Activated T-helper 1 cell treated with anti-CD3 and anti-CD28 coated beads, Interleukin-12 subunit alpha, Interleukin-12 subunit beta, Interleukin-2, Interleukin-4 antibody, amounts not matched to agents 30 ng/mL and 10 ng/mL and 1 ng/mL, durations not matched to agents 14 hours and 24 hours and 36 hours (primary cell): ENCODE measurements at regions of chr14 and their contacts with region 1.

Region 1: DNA sequence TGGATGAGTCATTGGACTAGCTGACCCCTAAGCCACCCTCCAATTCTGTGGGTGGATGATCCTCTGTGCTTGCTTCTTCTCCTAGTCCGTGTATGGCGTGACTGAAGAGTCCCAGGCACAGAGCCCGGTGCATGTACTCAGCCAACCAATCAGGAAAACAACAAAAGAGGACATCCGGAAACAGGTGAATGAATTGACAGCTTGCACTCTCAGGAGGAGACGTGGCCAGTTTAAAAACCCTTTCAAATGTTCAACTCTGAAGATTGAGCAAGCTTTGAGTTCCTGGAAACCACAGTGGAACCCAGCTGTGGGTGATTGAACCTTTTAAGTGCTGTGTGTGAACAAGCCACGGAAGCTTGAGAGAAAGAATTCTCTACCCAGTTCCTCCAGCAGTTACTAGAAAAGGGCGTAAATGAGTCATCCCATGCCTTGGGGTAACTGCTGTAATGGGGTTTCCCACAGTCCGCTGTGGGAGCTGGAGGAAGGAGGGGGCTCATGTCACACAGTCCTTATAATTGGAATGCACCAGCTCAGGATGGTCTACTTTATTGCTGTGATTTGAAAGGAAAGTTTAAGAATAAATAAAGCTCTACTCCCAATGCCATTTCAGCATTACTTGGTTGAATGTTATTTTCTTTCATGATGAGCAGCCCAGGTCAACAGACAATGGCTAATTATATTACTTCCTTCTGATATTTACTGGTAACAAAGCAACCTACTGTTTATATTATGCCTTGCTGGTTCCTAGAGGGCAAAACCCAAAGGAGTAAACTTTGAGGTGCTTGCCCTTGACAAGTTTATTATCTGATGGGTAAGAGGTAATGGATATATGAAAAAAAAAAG is 417.0 kb downstream of the DPF3 start:
- DNase-seq: peak; percentile 81
- H3K4me3 Mint-ChIP-seq: peak overlapping the region; percentile 53
- H3K27ac Mint-ChIP-seq: peak overlapping the region; percentile 87
- H3K4me1 Mint-ChIP-seq: peaks cover 80% of the 10 kb centered on the region
- H3K27me3 Mint-ChIP-seq: no peaks in the 10 kb centered on the region

Region 2: DNA sequence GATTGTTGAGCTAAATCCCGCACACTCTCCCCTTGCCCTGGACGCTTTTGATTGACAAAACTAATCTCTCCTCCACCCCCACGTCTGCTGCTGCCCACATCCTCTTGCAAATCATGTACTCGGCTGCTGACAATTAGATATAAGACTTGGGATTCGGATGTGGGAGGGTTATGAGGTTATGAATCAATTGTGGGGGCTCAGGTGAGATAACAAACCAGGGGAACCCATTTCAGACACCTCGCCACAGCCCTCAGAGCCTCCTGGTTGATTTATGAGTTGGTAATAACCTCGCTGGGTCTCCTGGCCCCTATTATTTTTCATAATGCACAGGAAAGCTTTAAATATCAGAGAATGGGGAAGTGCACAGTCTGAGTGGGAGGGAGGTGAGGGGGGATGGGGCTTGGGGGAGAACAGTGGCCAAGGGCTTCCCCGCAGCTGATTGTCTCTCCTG is 32.9 kb before region 1 on chr14:
- intact Hi-C with region 1: loop called (anchors 5 kb)
- DNase-seq: peak; percentile 27
- H3K4me3 Mint-ChIP-seq: peak overlapping the region; percentile 65
- H3K27ac Mint-ChIP-seq: peak overlapping the region; percentile 76
- H3K4me1 Mint-ChIP-seq: peaks cover 86% of the 10 kb centered on the region
- H3K27me3 Mint-ChIP-seq: no peaks in the 10 kb centered on the region

Region 3: DNA sequence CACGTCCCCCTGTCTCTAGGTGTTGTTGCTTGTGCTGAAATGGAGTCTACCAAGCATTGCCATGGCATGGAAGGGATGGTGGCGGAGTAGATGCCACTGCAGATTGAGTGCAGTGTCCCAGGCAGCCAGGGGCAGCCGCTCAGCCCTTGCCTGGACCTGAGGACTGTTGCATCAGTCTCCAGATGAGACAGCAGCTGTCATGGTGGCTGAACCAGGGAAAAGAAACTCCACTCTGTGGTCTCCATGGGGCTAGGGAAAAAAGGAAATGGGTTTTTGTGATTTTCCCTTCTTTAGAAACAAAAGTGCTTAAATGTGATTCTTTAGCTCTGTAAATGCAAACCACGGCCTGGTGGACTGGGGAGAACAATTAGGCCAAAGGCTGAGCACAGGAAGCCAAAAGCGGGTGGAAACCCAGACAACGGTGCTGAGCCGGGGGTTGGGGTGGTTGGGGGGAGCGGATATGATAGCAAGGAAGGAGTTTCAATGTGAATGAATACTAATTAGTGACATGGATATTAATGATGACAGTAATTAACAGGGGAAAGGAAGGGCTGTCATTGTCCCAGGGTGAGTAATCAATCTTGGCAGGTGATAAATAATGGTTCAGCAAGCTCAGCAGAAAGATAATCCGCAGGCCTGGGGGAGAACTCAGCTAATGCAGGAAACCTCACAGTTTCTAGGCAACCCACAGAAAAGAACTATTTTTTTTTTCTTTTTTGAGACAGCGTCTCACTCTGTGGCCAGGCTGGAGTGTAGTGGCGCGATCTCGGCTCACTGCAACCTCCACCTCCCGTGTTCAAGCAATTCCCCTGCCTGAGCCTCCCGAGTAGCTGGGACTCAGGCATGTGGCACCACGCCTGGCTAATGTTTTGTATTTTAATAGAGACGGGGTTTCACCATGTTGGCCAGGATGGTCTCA is 25.6 kb before region 1 on chr14:
- intact Hi-C with region 1: loop called (anchors 1 kb)
- DNase-seq: peak; percentile 41
- H3K4me3 Mint-ChIP-seq: peak overlapping the region; percentile 19
- H3K27ac Mint-ChIP-seq: peak overlapping the region; percentile 84
- H3K4me1 Mint-ChIP-seq: peaks cover 65% of the 10 kb centered on the region
- H3K27me3 Mint-ChIP-seq: peaks cover 1% of the 10 kb centered on the region

Region 4: GRCh38 chr14:72810201-72810600 is 333.3 kb after region 1 on chr14:
- intact Hi-C with region 1: loop called (anchors 1 kb)
- DNase-seq: peak; percentile 57
- H3K4me3 Mint-ChIP-seq: peak overlapping the region; percentile 48
- H3K27ac Mint-ChIP-seq: peak overlapping the region; percentile 92
- H3K4me1 Mint-ChIP-seq: peaks cover 31% of the 10 kb centered on the region
- H3K27me3 Mint-ChIP-seq: peaks cover 3% of the 10 kb centered on the region